Left lung (tissue), 14 donors: ENCODE measurements at regions of chr5 and their contacts with region 1.

Region 1: DNA sequence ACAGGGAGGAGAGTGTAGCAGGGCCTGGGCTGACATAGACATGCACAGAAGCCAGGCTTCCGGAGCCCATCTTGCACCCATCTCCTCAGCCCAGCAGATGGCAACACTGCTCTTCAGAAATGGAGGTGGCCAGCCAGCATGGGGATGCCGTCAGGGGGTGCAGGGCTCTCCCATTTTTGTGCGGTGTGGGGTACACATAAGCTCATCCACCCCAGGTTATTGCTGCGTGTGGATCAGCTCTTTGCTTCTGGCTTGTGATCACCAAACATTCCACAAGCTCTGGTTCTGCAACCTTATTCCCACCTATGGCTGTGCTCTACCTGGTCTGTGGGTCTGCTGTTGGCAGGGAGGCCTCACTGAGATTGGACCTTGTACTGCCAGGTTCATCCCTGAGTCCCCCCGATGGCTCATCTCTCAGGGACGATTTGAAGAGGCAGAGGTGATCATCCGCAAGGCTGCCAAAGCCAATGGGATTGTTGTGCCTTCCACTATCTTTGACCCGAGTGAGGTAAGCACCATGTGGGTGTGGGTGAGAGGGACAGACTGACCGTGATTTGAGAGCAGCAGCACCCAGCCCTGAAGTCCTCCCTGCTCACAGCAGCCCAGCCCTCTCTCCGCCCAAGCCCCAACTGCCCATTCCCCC is 17.3 kb downstream of the SLC22A5 start:
- DNase-seq: peak; percentile 48 to 90 (median 78)
- ATAC-seq: peak; percentile 84
- H3K4me3 ChIP-seq: no peak overlapping the region
- H3K27ac ChIP-seq: peak overlapping the region; percentile 87 to 92
- H3K4me1 ChIP-seq: peaks cover 27 to 54% of the 10 kb centered on the region in 2 donors
- H3K27me3 ChIP-seq: no peaks in the 10 kb centered on the region
- CTCF ChIP-seq: peak; percentile 63 to 88

Region 2: GRCh38 chr5:132500931-132501630 is 114.3 kb after region 1 on chr5:
- intact Hi-C with region 1: loop called in 1 of 2 experiments (anchors 5 kb)
- DNase-seq: peak in 3 of 4 donors; percentile 42 to 74 (median 68)
- ATAC-seq: peak; percentile 7
- H3K4me3 ChIP-seq: no peak overlapping the region
- H3K27ac ChIP-seq: peak overlapping the region in 1 of 2 donors; percentile 67
- H3K4me1 ChIP-seq: peaks cover 12 to 49% of the 10 kb centered on the region in 2 donors
- H3K27me3 ChIP-seq: no peaks in the 10 kb centered on the region
- CTCF ChIP-seq: peak; percentile 79 to 93

Region 3: DNA sequence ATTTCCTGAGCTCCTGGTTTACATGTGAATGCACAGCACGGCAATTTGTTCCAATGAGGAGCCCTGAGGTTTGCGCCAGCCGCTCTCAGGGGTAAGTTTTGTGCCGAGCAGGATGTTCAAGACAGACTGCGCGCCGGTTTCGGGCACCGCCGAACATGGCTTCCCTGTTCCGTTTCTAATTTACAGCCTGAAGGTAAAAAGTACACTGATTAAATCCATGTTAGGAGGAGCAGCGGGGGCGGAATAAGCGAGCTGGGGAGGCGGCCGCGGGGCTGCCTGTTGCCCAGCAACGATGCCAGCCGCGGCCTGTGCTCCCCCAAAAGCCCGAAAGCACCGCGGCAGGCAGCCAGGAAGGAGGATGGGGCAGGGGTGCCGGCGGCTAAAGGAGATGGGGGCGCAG is 432.7 kb after region 1 on chr5:
- intact Hi-C with region 1: loop called in 1 of 2 experiments (anchors 5 kb)
- DNase-seq: no peak
- ATAC-seq: no peak
- H3K4me3 ChIP-seq: no peak overlapping the region
- H3K27ac ChIP-seq: no peak overlapping the region
- H3K4me1 ChIP-seq: peaks cover 4 to 21% of the 10 kb centered on the region in 2 donors
- H3K27me3 ChIP-seq: peaks cover 0 to 59% of the 10 kb centered on the region in 2 donors
- CTCF ChIP-seq: no peak